Activated B cell treated with CpG ODN at 0.5 μM for 24 hours (primary cell): ENCODE measurements at regions of chr5 and their contacts with region 1.

Region 1: DNA sequence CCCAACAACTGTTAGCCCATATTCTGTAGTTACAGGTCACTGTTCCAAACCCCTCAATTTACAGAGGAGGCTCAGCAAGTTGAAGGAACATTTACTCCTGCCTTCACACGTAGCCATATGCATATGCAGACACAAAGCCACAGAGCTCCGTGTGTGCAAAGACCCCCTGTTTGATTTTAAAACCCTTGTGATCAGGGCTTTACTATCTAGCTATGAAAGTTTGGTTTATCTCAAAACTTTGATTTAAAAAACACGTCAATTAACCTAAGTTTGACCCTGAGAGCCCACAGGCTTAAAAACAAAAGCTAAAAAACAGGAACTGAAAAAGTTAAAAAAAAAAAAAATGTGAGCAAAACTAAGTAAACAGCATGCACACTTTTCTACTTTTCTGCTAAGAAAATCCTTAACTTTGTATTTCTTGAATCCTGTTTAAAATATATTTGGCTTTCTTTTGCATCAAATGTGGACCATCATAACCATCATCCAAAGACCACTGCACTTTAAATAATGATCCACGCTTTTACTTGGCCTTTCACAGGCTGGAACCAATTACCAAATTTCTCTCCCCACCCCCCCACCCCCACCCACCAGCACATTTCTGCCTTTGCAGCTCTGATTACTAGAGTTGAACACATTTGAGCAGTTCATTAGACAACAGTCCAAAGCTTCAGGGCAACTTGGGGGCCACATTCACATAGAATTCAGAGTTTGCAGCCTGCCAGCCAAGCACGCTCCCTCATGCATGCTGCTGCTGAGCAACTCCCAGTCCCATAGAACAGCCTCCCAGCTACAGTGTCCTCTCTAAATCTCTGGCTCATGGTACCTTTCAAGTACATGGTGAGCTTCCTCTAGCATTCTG is 128.8 kb upstream of the MAP3K1 start:
- DNase-seq: peak; percentile 31
- ATAC-seq: peak; percentile 72
- H3K4me3 Mint-ChIP-seq: peak overlapping the region; percentile 62
- H3K27ac Mint-ChIP-seq: peak overlapping the region; percentile 88
- H3K4me1 Mint-ChIP-seq: peaks cover 98% of the 10 kb centered on the region
- H3K27me3 Mint-ChIP-seq: no peaks in the 10 kb centered on the region
- CTCF ChIP-seq: no peak

Region 2: DNA sequence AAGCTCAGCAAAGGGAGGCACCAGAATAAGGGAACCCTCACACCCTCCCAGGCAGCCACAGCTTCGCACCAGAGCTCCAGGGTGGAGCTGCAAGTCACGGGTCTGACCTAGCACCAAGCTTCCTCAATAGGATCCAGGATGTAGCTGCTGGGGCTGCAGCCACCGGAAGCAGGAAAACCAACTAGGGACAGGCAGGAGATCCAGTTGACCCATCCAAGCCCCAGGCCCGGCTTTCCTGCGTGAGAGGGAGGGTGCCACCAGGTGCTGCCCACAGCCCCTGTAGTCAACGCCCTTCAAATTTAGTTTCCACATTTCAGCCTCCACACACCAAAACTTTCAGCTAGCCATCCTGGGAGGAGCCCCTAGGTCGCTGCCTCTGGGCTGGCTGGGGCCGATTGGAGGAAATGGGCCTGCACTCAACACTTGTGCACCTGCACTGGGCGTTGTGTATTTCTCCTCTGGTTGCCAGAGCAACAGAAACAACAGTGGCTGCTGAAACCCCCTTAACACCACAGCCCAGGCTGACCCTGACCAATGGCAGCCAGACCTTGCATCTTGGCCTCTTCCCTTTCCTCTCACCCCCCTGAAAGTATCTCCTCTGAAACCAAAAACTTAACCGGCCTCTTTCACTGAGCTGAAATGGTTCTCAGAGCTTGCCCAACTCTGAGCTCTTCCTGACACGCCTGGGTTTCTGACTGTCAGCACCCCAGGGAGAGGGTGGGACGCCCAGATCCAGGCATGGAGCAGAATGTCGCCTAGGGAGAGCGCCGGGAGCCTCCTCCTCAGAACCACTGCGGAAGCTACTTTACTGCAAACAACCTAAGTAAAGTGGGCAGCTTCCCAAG is 97.7 kb before region 1 on chr5:
- CTCF ChIA-PET with region 1: interaction called, 8 read pairs
- POLR2A ChIA-PET with region 1: interaction called, 19 read pairs
- intact Hi-C with region 1: loop called (anchors 1 kb)
- DNase-seq: peak; percentile 69
- ATAC-seq: peak; percentile 86
- H3K4me3 Mint-ChIP-seq: peak overlapping the region; percentile 64
- H3K27ac Mint-ChIP-seq: peak overlapping the region; percentile 97
- H3K4me1 Mint-ChIP-seq: peaks cover 69% of the 10 kb centered on the region
- H3K27me3 Mint-ChIP-seq: no peaks in the 10 kb centered on the region
- CTCF ChIP-seq: no peak

Region 3: DNA sequence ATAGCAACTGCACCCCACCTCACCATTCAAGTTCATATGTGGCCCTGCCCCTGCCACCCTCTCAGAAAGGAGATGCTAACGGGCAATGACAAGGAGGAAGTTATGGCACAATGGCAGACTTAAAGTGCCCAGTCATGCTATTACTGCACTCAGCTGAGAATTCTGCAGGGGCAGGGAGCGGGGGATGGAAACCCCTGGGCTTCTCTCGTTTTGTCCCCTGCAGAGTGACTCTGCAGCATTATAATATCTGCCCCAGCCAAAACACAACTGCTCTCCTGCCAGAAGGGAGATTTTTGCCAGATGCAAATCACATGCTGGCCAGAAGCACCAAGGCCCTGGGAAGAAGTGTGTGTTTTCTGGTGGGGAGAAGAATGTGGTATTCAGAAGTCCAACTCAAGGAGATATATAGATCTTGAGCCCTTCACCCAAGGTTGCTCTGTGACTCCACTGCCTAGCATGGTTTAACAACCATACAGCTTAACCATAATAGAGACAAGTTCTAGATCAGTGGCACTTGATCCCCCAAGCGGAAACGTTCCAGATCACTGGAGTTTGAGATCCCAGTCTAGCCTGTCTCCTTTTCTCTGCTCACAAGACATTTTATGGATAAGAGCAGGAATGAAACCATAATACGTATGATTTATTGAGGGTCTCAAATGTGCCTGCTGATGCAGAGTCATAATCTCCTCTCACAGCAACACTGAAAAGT is 78.2 kb before region 1 on chr5:
- CTCF ChIA-PET with region 1: no interaction called
- POLR2A ChIA-PET with region 1: no interaction called
- intact Hi-C with region 1: no loop called
- DNase-seq: no peak
- ATAC-seq: peak; percentile 67
- H3K4me3 Mint-ChIP-seq: no peak overlapping the region
- H3K27ac Mint-ChIP-seq: no peak overlapping the region
- H3K4me1 Mint-ChIP-seq: peaks cover 47% of the 10 kb centered on the region
- H3K27me3 Mint-ChIP-seq: no peaks in the 10 kb centered on the region
- CTCF ChIP-seq: no peak

Region 4: DNA sequence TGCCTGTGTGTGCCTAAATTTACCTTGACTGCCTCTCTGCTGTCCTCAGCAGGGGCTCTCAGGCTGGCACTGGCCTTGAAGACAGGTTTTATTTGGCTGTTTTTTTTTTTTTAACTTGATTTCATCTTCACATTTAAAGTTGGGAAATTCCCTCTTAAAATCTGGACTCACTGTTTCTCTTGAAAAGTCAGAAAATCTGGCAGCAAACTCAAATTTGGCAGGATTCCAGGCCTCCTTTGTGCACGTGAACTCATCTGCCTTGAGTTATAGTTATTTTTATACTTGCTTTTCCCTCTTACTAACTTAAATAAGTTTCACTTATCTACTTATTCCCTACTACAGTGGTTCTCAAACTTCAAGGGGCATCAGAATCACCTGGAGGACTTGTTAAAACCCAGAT is 10.3 kb after region 1 on chr5:
- CTCF ChIA-PET with region 1: interaction called, 3 read pairs
- POLR2A ChIA-PET with region 1: interaction called, 13 read pairs
- intact Hi-C with region 1: no loop called
- DNase-seq: no peak
- ATAC-seq: no peak
- H3K4me3 Mint-ChIP-seq: no peak overlapping the region
- H3K27ac Mint-ChIP-seq: no peak overlapping the region
- H3K4me1 Mint-ChIP-seq: peaks cover 70% of the 10 kb centered on the region
- H3K27me3 Mint-ChIP-seq: no peaks in the 10 kb centered on the region
- CTCF ChIP-seq: no peak

Region 5: GRCh38 chr5:56737002-56737621 is 50.5 kb after region 1 on chr5:
- CTCF ChIA-PET with region 1: no interaction called
- POLR2A ChIA-PET with region 1: interaction called, 7 read pairs
- intact Hi-C with region 1: loop called (anchors 2 kb)
- DNase-seq: no peak
- ATAC-seq: peak; percentile 29
- H3K4me3 Mint-ChIP-seq: peak overlapping the region; percentile 25
- H3K27ac Mint-ChIP-seq: peak overlapping the region; percentile 83
- H3K4me1 Mint-ChIP-seq: peaks cover 62% of the 10 kb centered on the region
- H3K27me3 Mint-ChIP-seq: no peaks in the 10 kb centered on the region
- CTCF ChIP-seq: no peak